WTC11 (cell line): ENCODE measurements at regions of chr12 and their contacts with region 1.

Region 1: DNA sequence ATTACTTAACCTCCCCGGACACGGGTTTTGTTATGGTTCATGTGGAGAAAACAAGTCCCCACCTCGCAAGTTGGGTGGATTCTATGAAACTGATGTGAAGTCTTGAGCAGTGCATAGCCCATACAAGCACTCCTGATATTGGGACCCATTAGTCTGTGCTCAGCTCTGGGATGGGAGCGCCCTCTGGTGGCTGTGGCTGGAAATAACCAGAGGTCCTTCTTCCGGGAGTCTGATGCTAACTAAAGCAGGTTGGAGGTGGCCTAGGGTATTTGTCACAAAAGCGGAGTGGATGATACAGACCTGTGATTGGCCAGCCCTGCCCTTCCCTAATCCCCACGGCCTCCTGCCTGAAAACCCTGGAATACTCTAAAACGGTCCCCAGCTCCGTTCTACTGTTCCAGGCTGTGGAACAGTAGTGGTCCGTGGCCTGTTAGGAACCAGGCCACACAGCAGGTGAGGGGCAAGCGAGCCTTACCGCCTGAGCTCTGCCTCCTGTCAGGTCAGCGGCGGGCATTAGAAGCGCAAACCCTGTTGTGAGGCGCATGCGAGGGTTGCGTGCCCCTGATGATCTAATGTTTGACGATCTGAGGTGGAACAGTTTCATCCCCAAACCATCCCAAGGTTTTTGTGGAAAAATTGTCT is 6.4 kb downstream of the SLC48A1 start:
- DNase-seq: peak; percentile 97
- ATAC-seq: peak; percentile 85
- H3K4me3 Mint-ChIP-seq: peak overlapping the region; percentile 44
- H3K27ac Mint-ChIP-seq: peak overlapping the region; percentile 37; the same call in 1 of the 2 replicates
- H3K4me1 Mint-ChIP-seq: peaks cover 32% of the 10 kb centered on the region
- H3K27me3 Mint-ChIP-seq: peaks cover 11% of the 10 kb centered on the region
- CTCF ChIP-seq: peak; percentile 93

Region 2: DNA sequence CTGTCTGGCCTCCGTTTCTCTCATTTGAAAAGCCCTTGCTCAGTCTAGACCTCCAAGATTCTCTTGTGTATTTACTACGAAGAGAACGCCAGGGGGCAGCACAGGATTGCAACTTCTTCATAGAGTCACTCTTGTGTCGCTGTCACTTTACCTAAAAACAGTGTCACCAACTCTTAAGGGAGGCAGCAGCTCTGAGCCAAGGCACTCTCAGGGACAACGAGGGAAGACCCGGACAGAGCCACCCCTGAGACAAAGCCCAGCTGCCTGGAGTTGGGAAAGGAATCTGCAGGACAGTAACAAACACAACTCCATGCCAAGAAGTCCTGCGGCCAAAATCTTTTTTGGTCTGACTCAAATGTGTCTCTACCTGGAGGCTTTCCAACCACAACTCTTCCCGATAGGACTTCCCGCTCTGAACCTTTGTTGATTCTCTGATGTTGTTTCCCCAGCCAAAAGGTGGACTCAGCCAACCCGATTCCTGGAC is 64.0 kb before region 1 on chr12:
- CTCF ChIA-PET with region 1: interaction called, 58 read pairs
- POLR2A ChIA-PET with region 1: interaction called, 4 read pairs
- DNase-seq: peak; percentile 71
- ATAC-seq: peak; percentile 43
- H3K4me3 Mint-ChIP-seq: no peak overlapping the region
- H3K27ac Mint-ChIP-seq: no peak overlapping the region
- H3K4me1 Mint-ChIP-seq: peaks cover 29% of the 10 kb centered on the region
- H3K27me3 Mint-ChIP-seq: peaks cover 72% of the 10 kb centered on the region
- CTCF ChIP-seq: peak; percentile 72

Region 3: DNA sequence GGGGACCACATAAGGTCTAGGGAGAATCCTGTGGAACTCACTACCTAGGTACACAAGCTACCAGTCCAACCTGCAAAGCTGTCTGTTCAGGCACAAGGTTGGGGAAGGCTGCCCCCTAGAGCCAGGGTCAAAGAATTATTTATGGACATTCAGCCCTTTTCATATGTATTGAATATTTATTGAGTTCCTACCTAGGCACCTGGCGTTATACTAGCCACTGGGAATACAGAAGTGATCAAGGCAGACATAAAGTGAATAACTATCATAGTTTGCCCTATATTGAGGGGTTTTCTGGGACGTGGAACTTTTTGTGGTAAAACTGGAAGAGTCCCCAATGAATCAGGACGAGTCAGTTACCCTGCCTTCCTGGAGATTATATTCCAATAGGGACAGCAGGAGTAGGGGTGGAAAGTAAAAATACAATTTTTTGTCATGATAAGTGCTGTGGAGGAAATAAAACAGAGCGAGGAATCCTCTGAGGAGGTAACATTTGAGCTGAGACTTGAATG is 12.2 kb before region 1 on chr12:
- CTCF ChIA-PET with region 1: interaction called, 118 read pairs
- POLR2A ChIA-PET with region 1: interaction called, 4 read pairs
- DNase-seq: peak; percentile 76
- ATAC-seq: peak; percentile 61
- H3K4me3 Mint-ChIP-seq: no peak overlapping the region
- H3K27ac Mint-ChIP-seq: no peak overlapping the region
- H3K4me1 Mint-ChIP-seq: peaks cover 18% of the 10 kb centered on the region
- H3K27me3 Mint-ChIP-seq: peaks cover 6% of the 10 kb centered on the region
- CTCF ChIP-seq: peak; percentile 51; the same call in 1 of the 2 replicates

Region 4: GRCh38 chr12:47797441-47797840 is 18.0 kb after region 1 on chr12:
- CTCF ChIA-PET with region 1: interaction called, 49 read pairs
- POLR2A ChIA-PET with region 1: no interaction called
- DNase-seq: peak; percentile 69
- ATAC-seq: peak; percentile 83
- H3K4me3 Mint-ChIP-seq: no peak overlapping the region
- H3K27ac Mint-ChIP-seq: no peak overlapping the region; the same call in 1 of the 2 replicates
- H3K4me1 Mint-ChIP-seq: peaks cover 28% of the 10 kb centered on the region
- H3K27me3 Mint-ChIP-seq: no peaks in the 10 kb centered on the region
- CTCF ChIP-seq: 0 out of 2 replicates have a peak, but pooled peaks have one; percentile 27

Region 5: DNA sequence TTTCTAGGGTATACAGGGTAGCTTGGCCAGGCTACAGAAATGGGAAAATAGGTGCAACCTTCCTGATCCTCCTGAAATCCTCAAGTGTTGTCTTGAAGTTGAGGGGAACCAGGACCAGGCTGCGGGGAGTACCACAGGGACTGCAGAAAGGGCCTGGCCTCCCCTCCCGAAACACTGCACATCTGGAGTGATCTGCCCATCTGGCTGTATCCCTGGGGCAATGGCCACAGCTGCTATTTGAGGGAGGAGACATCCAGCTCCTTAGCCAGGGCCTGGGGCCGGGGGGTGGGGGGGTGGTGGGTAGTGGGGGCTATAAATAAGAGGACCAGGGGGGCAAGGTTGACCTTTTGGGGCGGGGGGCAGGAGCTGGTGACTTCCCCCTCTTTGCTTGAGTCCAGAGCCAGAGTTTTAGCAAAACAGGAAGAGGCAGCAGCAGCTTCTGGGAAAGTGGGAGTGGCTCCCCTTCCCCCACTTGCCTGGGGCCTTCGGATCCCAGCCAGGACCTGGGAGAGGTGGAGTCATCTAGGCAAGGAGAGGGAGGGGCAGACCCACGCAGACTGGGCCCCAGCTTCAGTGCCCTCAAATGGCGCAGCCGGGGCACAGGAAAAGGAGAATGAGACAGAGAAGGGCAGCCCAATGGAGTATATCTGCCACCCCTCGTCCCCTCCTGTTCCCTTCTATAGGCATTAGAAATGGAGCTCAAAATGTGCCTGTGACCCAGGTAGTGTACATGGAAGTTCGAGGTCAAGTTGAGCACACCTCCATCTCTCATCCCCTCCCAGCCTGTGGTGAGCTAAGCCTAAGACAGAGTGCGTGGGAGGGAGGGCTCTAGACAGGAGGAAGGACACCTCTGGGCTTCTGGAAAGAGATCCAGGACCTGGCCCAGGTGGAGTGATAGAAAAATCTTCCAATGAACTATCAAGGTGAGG is 49.5 kb after region 1 on chr12:
- CTCF ChIA-PET with region 1: interaction called, 27 read pairs
- POLR2A ChIA-PET with region 1: no interaction called
- DNase-seq: peak; percentile 58
- ATAC-seq: peak; percentile 84
- H3K4me3 Mint-ChIP-seq: 0 out of 2 replicates have a peak overlapping the region, but pooled peaks have one; percentile 14
- H3K27ac Mint-ChIP-seq: no peak overlapping the region
- H3K4me1 Mint-ChIP-seq: peaks cover 37% of the 10 kb centered on the region
- H3K27me3 Mint-ChIP-seq: peaks cover 4% of the 10 kb centered on the region; the same call in 1 of the 2 replicates
- CTCF ChIP-seq: no peak

Region 6: GRCh38 chr12:47935184-47935583 is 155.8 kb after region 1 on chr12:
- CTCF ChIA-PET with region 1: no interaction called
- POLR2A ChIA-PET with region 1: no interaction called
- DNase-seq: no peak
- ATAC-seq: no peak
- H3K4me3 Mint-ChIP-seq: no peak overlapping the region
- H3K27ac Mint-ChIP-seq: no peak overlapping the region
- H3K4me1 Mint-ChIP-seq: no peaks in the 10 kb centered on the region
- H3K27me3 Mint-ChIP-seq: peaks cover 7% of the 10 kb centered on the region; the same call in 1 of the 2 replicates
- CTCF ChIP-seq: no peak